Sciatic nerve (tissue), 2 donors: ENCODE measurements at regions of chr13 and their contacts with region 1.

Region 1: DNA sequence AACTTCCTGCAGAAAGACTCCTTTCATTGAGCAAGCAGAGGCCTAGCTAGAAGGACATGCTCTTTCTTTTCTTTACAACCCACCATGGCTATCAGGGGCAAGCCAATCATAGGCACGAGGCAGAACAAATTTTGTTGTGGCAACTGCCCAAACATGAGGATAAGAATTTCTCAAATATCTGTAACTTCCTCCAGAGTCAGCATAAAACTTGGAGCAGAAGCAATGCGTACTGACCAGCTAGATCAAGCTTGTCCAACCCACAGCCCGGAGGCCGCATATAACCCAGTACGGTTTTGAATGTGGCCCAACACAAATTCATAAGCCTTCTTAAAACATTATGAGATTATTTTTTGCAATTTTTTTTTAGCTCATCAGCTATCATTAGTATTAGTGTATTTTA is 87.0 kb upstream of the SOX21 start:
- DNase-seq: no peak
- ATAC-seq: peak; percentile 72

Region 2: GRCh38 chr13:93446238-93446637 is 1353.1 kb before region 1 on chr13:
- intact Hi-C with region 1: loop called (anchors 5 kb)
- DNase-seq: no peak
- ATAC-seq: no peak

Region 3: GRCh38 chr13:94620286-94620896 is 178.9 kb before region 1 on chr13:
- intact Hi-C with region 1: no loop called
- DNase-seq: no peak
- ATAC-seq: no peak